RWPE1 (cell line): ENCODE measurements at regions of chr17 and their contacts with region 1.

Region 1: GRCh38 chr17:74852237-74853047 is 7.2 kb downstream of the GRIN2C start:
- DNase-seq: peak; percentile 70
- H3K27ac ChIP-seq: no peak overlapping the region
- CTCF ChIP-seq: no peak

Region 2: DNA sequence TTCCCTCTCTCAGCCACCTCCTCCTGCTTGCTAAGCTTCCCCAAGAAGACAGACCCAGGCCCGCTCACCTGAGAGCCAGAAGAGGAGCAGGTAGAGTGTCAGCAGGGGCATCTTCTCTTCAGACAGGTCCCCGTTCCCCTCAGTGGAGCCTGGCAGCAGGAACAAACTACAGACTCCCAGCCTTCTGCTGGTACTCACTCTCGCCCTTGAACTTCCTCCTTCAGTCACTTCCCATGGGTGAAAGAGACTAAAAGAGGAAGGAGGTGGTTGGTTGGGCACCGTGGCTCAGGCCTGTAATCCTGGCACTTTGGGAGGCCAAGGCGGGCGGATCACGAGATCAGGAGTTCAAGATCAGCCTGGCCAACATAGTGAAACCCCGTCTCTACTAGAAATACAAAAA is 139.7 kb before region 1 on chr17 and contains the start of gene CD300LF:
- CTCF ChIA-PET with region 1: no interaction called
- POLR2A ChIA-PET with region 1: no interaction called
- DNase-seq: no peak
- H3K27ac ChIP-seq: no peak within 1 kb of the TSS
- CTCF ChIP-seq: no peak

Region 3: DNA sequence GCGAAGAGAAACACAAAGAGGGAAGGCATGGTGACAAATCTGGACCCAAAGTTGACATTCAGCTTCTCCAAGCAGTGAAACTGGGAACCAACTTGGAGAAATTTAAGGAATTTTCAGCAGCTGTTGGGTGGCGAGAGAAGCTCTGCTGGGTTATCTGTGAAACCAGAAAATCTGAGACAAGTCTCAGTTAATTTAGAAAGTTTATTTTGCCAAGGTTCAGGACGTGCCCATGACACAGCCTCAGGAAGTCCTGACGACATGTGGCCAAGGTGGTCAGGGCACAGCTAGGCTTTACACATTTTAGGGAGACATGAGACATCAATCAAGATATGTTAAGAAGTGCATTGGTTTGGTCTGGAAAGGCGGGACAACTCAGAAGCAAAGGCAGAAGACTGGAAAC is 128.6 kb before region 1 on chr17:
- CTCF ChIA-PET with region 1: no interaction called
- POLR2A ChIA-PET with region 1: no interaction called
- DNase-seq: no peak
- H3K27ac ChIP-seq: no peak overlapping the region
- CTCF ChIP-seq: no peak

Region 4: GRCh38 chr17:74807925-74808324 is 44.5 kb before region 1 on chr17:
- CTCF ChIA-PET with region 1: no interaction called
- POLR2A ChIA-PET with region 1: no interaction called
- DNase-seq: no peak
- H3K27ac ChIP-seq: no peak overlapping the region
- CTCF ChIP-seq: no peak

Region 5: DNA sequence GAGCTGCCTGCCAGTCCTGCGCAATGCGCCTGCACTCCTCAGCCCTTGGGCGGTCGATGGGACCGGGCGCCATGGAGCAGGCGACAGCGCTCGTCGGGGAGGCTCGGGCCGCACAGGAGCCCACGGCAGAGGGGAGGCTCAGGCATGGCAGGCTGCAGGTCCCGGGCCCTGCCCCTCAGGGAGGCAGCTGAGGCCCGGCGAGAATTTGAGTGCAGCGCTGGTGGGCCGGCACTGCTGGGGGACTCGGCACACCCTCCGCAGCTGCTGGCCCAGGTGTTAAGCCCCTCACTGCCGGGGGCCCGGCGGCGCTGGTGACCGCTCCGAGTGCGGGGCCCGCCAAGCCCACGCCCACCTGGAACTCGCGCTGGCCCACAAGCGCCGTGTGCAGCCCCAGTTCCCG is 54.6 kb after region 1 on chr17:
- CTCF ChIA-PET with region 1: no interaction called
- POLR2A ChIA-PET with region 1: no interaction called
- DNase-seq: no peak
- H3K27ac ChIP-seq: no peak overlapping the region
- CTCF ChIP-seq: no peak

Region 6: DNA sequence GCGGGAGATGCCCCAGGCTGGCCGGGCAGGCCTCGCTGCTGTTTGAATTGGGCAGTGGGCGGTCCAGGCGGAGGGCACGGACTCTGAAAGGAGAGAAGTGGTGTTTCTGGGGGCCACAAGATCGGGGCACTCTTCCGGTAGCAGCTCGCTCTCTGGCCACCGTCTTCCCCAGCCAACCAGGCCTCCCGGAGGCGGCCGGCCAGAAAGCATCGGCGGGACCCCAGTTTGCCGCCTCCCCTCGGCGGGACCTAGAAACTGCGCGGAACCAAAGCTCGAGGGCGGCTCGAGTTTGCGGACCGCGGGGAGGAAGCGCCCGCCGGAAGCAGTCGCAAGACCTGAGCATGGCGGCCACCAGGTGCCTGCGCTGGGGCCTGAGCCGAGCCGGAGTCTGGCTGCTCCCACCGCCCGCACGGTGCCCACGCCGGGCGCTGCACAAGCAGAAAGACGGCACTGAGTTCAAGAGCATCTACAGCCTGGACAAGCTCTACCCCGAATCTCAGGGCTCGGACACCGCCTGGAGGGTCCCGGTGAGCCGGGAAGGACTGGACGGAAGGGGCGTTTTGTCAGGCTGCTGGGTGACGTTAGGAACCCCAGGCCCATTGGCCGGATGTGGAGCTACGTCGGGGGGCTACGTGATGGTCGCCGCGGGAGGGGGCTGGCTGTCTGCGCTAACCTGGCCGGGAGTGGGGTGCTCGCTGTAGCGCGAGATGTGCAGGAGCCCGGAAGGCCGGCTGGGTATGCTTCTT is 160.1 kb after region 1 on chr17 and contains the start of gene MRPL58:
- CTCF ChIA-PET with region 1: no interaction called
- POLR2A ChIA-PET with region 1: interaction called, 18 read pairs
- DNase-seq: peak; percentile 85
- H3K27ac ChIP-seq: peak within 1 kb of the TSS; percentile 92
- CTCF ChIP-seq: no peak; the same call in none of the 2 replicates